Aorta (tissue), 5 donors: ENCODE measurements at regions of chrX and their contacts with region 1.

Region 1: DNA sequence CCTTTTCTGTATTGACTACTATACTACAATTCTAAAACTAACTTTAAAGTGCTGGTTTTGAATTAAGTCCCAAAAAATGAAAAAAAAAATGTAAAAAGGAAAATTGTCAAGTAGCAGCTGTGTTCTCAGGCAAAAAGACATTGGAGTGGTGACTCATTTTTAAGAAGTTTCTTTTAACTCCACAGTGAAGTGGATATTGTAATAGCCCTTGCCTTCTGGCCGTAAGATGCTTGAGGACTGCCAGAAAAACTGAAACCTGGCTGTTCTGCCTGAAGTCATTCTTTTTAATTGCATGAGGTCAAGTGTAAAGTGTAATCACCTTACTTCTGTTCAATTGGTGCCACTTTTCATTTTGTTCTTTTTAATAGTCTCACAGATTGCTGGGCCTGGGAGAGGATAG is 28.9 kb downstream of the SPANXD start:
- DNase-seq: no peak
- ATAC-seq: no peak
- H3K4me3 ChIP-seq: no peak overlapping the region
- H3K27ac ChIP-seq: no peak overlapping the region
- H3K4me1 ChIP-seq: no peaks in the 10 kb centered on the region
- H3K27me3 ChIP-seq: no peaks in the 10 kb centered on the region

Region 2: GRCh38 chrX:141439651-141440050 is 230.0 kb before region 1 on chrX:
- intact Hi-C with region 1: loop called in 1 of 2 experiments (anchors 5 kb)
- DNase-seq: no peak
- ATAC-seq: no peak
- H3K4me3 ChIP-seq: no peak overlapping the region
- H3K27ac ChIP-seq: no peak overlapping the region
- H3K4me1 ChIP-seq: no peaks in the 10 kb centered on the region
- H3K27me3 ChIP-seq: no peaks in the 10 kb centered on the region

Region 3: GRCh38 chrX:141903400-141904155 is 233.9 kb after region 1 on chrX and contains the start of gene MAGEC1:
- intact Hi-C with region 1: no loop called
- DNase-seq: no peak
- ATAC-seq: no peak
- H3K4me3 ChIP-seq: no peak within 1 kb of the TSS
- H3K27ac ChIP-seq: no peak within 1 kb of the TSS
- H3K4me1 ChIP-seq: no peaks in the 10 kb centered on the region
- H3K27me3 ChIP-seq: no peaks in the 10 kb centered on the region
- total RNA-seq, gene MAGEC1: not detected